Heart left ventricle (tissue), 16 donors: ENCODE measurements at regions of chr11 and their contacts with region 1.

Region 1: DNA sequence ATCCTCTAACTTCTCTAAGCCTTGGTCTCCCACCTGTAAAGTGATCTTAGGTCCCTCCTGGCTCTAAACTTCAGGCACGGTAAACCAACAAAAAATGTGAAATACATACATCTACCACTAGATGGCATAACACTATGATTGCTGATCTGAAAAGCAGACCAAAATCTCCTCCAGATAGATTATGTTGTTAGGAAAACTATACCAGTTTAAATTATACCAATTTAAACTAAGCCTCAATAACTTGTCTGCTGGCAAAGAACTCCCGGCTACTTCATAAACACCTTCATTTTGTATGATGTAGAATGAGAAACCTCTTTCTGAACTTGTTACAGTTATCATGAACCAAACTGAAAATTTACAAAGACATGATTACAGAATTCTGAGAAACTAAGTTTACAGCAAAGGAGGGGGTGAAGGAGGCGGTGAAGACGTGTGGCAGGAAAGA is 85.9 kb downstream of the SBF2 start:
- DNase-seq: no peak
- ATAC-seq: peak in 2 of 4 donors; percentile 46 to 54
- H3K4me3 ChIP-seq: no peak overlapping the region
- H3K27ac ChIP-seq: no peak overlapping the region
- H3K4me1 ChIP-seq: peaks cover 0 to 12% (median 3%) of the 10 kb centered on the region in 12 donors
- H3K27me3 ChIP-seq: no peaks in the 10 kb centered on the region
- CTCF ChIP-seq: peak; percentile 62 to 82 (median 74)
- POLR2A ChIP-seq: no peak

Region 2: GRCh38 chr11:9861860-9862725 is 346.1 kb before region 1 on chr11:
- intact Hi-C with region 1: loop called in 1 of 10 experiments (anchors 5 kb)
- DNase-seq: peak in 4 of 5 donors; percentile 31 to 48 (median 38)
- ATAC-seq: peak in 3 of 4 donors; percentile 82 to 85 (median 84)
- H3K4me3 ChIP-seq: no peak overlapping the region
- H3K27ac ChIP-seq: no peak overlapping the region
- H3K4me1 ChIP-seq: peaks cover 0 to 17% (median 5%) of the 10 kb centered on the region in 12 donors
- H3K27me3 ChIP-seq: no peaks in the 10 kb centered on the region
- CTCF ChIP-seq: peak; percentile 54 to 79 (median 64)
- POLR2A ChIP-seq: no peak

Region 3: GRCh38 chr11:10139656-10140055 is 68.5 kb before region 1 on chr11:
- intact Hi-C with region 1: loop called in 1 of 10 experiments (anchors 2 kb)
- DNase-seq: no peak
- ATAC-seq: peak in 3 of 4 donors; percentile 48 to 67 (median 55)
- H3K4me3 ChIP-seq: no peak overlapping the region
- H3K27ac ChIP-seq: peak overlapping the region in 1 of 12 donors; percentile 15
- H3K4me1 ChIP-seq: peaks cover 0 to 19% (median 9%) of the 10 kb centered on the region in 12 donors
- H3K27me3 ChIP-seq: no peaks in the 10 kb centered on the region
- CTCF ChIP-seq: no peak
- POLR2A ChIP-seq: no peak

Region 4: GRCh38 chr11:10225553-10225952 is 17.4 kb after region 1 on chr11:
- intact Hi-C with region 1: no loop called
- DNase-seq: no peak
- ATAC-seq: no peak
- H3K4me3 ChIP-seq: no peak overlapping the region
- H3K27ac ChIP-seq: no peak overlapping the region
- H3K4me1 ChIP-seq: peaks cover 0 to 14% (median 6%) of the 10 kb centered on the region in 12 donors
- H3K27me3 ChIP-seq: no peaks in the 10 kb centered on the region
- CTCF ChIP-seq: no peak
- POLR2A ChIP-seq: no peak

Region 5: GRCh38 chr11:10293423-10294289 is 85.5 kb after region 1 on chr11 and contains the start of gene SBF2:
- intact Hi-C with region 1: loop called in 3 of 10 experiments (anchors 5 kb)
- DNase-seq: peak; percentile 87 to 95 (median 89)
- ATAC-seq: peak; percentile 90 to 96 (median 92)
- H3K4me3 ChIP-seq: peak within 1 kb of the TSS; percentile 74 to 98 (median 96)
- H3K27ac ChIP-seq: peak within 1 kb of the TSS; percentile 90 to 99 (median 97)
- H3K4me1 ChIP-seq: peaks cover 0 to 62% (median 16%) of the 10 kb centered on the region in 12 donors
- H3K27me3 ChIP-seq: no peaks in the 10 kb centered on the region
- CTCF ChIP-seq: no peak
- POLR2A ChIP-seq: peak in 1 of 2 donors; percentile 62
- total RNA-seq, gene SBF2: 15.3 to 33.9 (median 21.5) TPM

Region 6: DNA sequence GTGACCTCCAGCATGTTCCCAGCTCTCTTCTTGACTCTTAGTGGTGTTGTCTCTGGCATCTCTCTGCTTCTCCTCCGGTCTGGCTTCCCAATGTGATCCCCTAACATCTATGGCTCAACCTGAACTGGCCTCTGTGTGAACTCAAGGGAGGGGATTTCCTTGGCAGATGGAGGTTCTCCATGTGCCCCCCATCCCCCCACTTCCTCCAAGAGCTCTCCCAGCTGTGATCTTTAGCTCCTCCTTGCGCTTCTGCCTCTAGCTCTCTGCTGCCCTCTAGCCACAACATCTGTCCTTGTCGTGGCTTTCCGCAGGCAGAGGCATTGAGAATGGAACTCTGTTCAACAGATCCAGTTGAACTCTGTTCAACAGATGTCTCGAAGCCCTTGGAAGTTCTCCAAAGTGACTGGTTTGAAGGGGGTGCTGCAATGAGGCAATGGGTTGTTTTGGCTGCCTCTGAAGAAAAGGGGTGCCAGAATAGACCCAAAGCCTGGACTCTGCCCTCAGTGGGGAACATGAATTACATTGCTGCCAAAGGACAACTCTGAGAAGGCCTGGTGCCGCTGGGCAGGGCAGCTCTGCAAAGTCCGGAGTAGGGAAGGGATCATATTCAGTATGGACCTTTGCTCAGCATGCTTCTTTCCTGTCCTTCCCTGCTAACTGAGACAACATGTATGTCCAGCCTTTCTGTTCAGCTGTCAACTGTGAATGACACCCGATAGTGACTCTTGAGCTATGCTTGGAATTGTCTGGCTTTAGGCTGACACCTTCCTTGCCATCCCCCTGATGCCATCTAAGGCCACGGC is 158.6 kb after region 1 on chr11:
- intact Hi-C with region 1: loop called in 3 of 10 experiments (anchors 5 kb)
- DNase-seq: peak; percentile 72 to 88 (median 87)
- ATAC-seq: peak; percentile 76 to 96 (median 94)
- H3K4me3 ChIP-seq: no peak overlapping the region
- H3K27ac ChIP-seq: peak overlapping the region in 2 of 12 donors; percentile 7 to 42
- H3K4me1 ChIP-seq: peaks cover 0 to 10% (median 7%) of the 10 kb centered on the region in 12 donors
- H3K27me3 ChIP-seq: no peaks in the 10 kb centered on the region
- CTCF ChIP-seq: peak; percentile 77 to 94 (median 86)
- POLR2A ChIP-seq: no peak